Spleen (tissue), 13 donors: ENCODE measurements at regions of chr11 and their contacts with region 1.

Region 1: DNA sequence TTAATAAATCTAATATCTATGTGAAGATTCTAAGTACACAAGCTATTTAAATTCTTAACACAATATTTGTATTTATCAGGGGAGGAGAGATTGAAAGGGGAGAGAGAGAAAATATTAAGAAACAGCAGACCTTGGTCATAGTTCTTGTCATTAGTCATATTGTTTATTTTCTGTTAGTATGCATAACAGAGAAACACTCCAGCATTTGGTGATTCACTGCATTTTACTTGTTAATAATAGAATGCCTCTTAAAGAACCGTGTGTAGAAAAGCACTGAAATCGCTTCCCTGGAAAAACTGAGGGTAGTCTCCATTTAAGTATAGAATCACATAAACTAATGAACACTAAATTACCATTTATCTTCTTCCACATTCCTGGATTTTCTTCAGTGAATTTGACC is 122.7 kb upstream of the TRPC6 start:
- DNase-seq: no peak
- H3K4me3 ChIP-seq: no peak overlapping the region
- H3K27ac ChIP-seq: no peak overlapping the region
- H3K4me1 ChIP-seq: no peaks in the 10 kb centered on the region
- H3K27me3 ChIP-seq: no peaks in the 10 kb centered on the region
- CTCF ChIP-seq: no peak
- POLR2A ChIP-seq: no peak

Region 2: GRCh38 chr11:101686558-101687242 is 19.8 kb before region 1 on chr11:
- intact Hi-C with region 1: loop called (anchors 2 kb)
- DNase-seq: no peak
- H3K4me3 ChIP-seq: no peak overlapping the region
- H3K27ac ChIP-seq: no peak overlapping the region
- H3K4me1 ChIP-seq: no peaks in the 10 kb centered on the region
- H3K27me3 ChIP-seq: no peaks in the 10 kb centered on the region
- CTCF ChIP-seq: no peak
- POLR2A ChIP-seq: no peak